ENCODE measurements at regions of chr15 and their contacts with region 1.

Region 1: DNA sequence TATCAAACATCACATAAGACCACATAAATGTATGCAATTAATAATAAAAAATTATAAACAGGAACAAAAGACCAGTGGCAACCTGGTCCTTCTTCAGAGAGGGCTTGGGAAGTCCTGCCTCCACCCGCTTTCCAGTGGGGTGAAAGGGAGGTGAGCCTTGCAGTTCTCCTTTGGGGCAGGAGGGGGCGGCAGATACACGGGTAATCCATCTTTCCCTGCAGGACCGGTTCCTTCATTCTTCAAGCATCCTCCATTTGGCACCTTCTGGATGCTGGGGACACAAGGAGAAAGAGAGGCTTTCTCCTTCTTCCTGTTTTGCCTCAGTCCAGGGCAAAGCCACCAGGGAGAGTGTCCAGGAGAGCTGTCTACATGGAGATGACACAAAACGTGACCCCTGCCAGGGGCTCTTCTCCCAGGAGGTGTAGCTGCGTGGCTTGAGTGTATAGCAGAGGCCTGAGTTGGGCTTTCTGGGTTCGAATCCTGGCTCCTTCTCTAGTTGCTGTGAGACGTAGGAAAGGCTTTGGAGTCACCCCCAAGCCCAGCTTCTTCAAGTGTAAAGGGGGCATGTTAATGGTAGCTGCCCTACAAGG is 23.2 kb downstream of the RPLP1 start:
- DNase-seq: peak; percentile 59
- H3K4me3 Mint-ChIP-seq: no peak overlapping the region
- H3K27ac Mint-ChIP-seq: no peak overlapping the region
- H3K4me1 Mint-ChIP-seq: peaks cover 2% of the 10 kb centered on the region
- H3K27me3 Mint-ChIP-seq: peaks cover 23% of the 10 kb centered on the region

Region 2: DNA sequence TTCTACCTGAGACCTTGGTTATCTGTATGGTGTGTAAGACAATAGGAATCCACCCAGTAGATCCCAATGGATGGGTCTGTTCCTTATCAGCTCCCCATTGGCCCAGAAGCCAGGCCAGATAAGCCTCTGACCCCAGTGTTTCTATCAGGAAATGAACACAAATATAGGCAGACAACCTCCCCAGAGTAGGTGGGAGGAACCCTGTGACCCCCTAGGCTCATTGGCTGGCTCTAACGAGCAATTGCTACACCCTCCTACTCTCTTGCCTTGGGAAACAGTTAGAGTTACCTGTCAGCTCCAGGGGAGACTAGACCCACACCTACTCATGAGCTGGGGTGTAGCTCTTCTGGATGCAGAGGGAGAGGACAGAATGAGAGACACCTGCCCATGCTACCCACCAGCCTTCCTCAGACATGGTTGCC is 987.6 kb after region 1 on chr15:
- intact Hi-C with region 1: loop called (anchors 5 kb)
- DNase-seq: no peak
- H3K4me3 Mint-ChIP-seq: no peak overlapping the region
- H3K27ac Mint-ChIP-seq: no peak overlapping the region
- H3K4me1 Mint-ChIP-seq: peaks cover 16% of the 10 kb centered on the region
- H3K27me3 Mint-ChIP-seq: peaks cover 74% of the 10 kb centered on the region

Measured in activated T-helper 2 cell treated with anti-CD3 and anti-CD28 coated beads, Interferon-gamma antibody, Interleukin-2, Interleukin-4, amounts not matched to agents 10 μg/mL and 5 μg/mL and 100 μg/mL, durations not matched to agents 14 hours and 24 hours and 36 hours (primary cell).